PC-9 (cell line): ENCODE measurements at regions of chr18 and their contacts with region 1.

Region 1: DNA sequence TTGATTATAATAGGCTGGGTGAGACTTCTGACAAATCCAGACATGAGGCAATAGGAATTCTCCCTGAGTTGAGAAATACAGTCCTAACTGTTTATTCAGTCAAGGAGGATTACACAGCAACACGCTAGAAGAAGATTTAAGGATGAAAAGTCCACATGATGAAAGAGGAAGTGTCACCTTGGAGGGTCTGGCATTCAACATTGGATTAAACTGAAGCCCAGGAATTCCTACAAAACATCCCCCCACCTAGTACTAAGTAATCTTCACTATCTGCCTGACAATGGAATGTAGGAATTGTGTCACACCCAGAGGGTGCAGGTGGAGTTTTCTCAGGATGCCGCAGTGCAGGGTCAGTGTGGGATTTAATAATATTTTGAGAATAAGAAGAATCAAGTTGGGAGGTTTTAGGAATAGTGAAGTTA is 142.4 kb downstream of the SOCS6 start:
- DNase-seq: peak in 1 of 2 experiments; percentile 61
- H3K4me3 ChIP-seq: no peak overlapping the region
- H3K27ac ChIP-seq: peak overlapping the region; percentile 39
- H3K4me1 ChIP-seq: peaks cover 20% of the 10 kb centered on the region
- H3K27me3 ChIP-seq: no peaks in the 10 kb centered on the region
- CTCF ChIP-seq: no peak

Region 2: DNA sequence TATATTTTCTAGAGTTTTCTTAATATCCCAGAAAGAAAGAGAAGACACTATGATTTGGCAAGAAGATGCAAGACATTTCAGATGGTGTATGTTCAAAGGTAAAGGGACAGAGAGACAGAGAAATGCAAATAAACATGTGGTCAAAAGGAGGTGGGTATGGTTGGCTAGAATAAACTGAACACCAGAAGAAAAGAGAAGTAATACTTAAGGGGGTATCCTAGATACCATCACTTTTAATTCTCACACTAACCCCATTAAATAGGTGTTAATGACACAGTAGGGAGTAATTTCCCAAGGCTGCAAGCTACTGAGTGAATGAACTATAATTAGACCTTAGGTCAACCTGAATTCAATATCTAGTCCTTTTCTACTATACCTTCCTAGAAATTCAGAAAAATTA is 372.3 kb before region 1 on chr18:
- CTCF ChIA-PET with region 1: no interaction called
- POLR2A ChIA-PET with region 1: no interaction called
- intact Hi-C with region 1: no loop called
- DNase-seq: no peak
- H3K4me3 ChIP-seq: no peak overlapping the region
- H3K27ac ChIP-seq: no peak overlapping the region
- H3K4me1 ChIP-seq: no peaks in the 10 kb centered on the region
- H3K27me3 ChIP-seq: no peaks in the 10 kb centered on the region
- CTCF ChIP-seq: no peak

Region 3: GRCh38 chr18:70181015-70181414 is 250.2 kb before region 1 on chr18:
- CTCF ChIA-PET with region 1: no interaction called
- POLR2A ChIA-PET with region 1: no interaction called
- intact Hi-C with region 1: loop called (anchors 5 kb)
- DNase-seq: peak; percentile 3 to 90
- H3K4me3 ChIP-seq: no peak overlapping the region
- H3K27ac ChIP-seq: peak overlapping the region; percentile 62
- H3K4me1 ChIP-seq: peaks cover 17% of the 10 kb centered on the region
- H3K27me3 ChIP-seq: no peaks in the 10 kb centered on the region
- CTCF ChIP-seq: no peak

Region 4: DNA sequence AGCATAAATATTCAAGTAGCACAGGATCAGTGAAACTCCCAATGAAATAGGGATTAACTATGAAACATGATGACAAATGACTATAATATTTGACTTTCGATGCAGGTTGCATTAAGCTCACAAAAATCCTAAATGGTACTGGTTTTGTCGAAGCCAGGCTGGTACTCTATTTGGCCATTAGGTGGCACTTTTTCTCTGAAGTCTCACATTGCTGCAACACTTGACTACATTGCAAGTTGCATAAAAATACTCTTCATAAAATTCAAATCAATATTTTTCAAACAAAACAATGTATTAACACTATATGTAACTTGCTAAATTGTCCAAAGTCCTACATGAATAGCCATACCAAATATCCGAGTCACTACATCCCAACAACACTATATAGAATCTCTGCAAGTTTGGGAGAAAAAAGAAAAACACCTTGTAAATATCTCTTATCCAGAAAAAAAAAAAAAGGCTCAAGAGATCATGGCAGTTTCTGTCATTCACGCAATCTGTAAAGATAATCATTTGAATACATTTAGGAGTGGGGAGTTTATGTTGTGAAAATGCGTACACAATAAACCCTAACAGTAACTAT is 235.3 kb before region 1 on chr18:
- CTCF ChIA-PET with region 1: interaction called, 12 read pairs
- POLR2A ChIA-PET with region 1: no interaction called
- intact Hi-C with region 1: loop called (anchors 1 kb)
- DNase-seq: peak; percentile 9 to 61
- H3K4me3 ChIP-seq: no peak overlapping the region
- H3K27ac ChIP-seq: peak overlapping the region; percentile 45; the same call in 1 of the 2 replicates
- H3K4me1 ChIP-seq: no peaks in the 10 kb centered on the region
- H3K27me3 ChIP-seq: no peaks in the 10 kb centered on the region
- CTCF ChIP-seq: peak; percentile 84

Region 5: GRCh38 chr18:70288851-70289328 is 142.3 kb before region 1 on chr18 and contains the start of gene SOCS6:
- CTCF ChIA-PET with region 1: no interaction called
- POLR2A ChIA-PET with region 1: no interaction called
- intact Hi-C with region 1: loop called (anchors 5 kb)
- DNase-seq: peak; percentile 53 to 58
- H3K4me3 ChIP-seq: peak within 1 kb of the TSS; percentile 94
- H3K27ac ChIP-seq: peak within 1 kb of the TSS; percentile 61
- H3K4me1 ChIP-seq: peaks cover 45% of the 10 kb centered on the region
- H3K27me3 ChIP-seq: no peaks in the 10 kb centered on the region
- CTCF ChIP-seq: no peak
- total RNA-seq, gene SOCS6: 20.9 and 21.0 TPM in 2 replicates

Region 6: DNA sequence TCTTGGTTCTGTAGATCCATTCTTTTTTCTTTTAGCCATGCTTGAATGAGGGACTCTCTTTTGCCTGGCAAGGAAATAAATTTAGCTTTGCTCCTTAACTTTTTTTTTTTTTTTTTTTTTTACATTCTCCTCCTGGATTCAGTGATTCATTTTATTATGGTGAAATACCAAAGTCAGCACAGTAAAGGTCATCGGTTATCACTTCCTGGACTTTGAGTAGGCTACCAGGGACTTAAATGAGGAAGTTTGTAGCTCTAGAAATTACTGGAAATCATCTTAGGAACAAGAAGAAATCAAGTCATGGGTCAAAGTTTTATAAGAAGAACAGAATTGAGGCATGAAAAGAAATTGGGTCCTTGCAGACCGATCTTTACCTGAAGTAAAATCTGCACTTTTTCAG is 67.4 kb before region 1 on chr18:
- CTCF ChIA-PET with region 1: no interaction called
- POLR2A ChIA-PET with region 1: interaction called, 14 read pairs
- intact Hi-C with region 1: no loop called
- DNase-seq: peak in 1 of 2 experiments; percentile 88
- H3K4me3 ChIP-seq: no peak overlapping the region
- H3K27ac ChIP-seq: peak overlapping the region; percentile 57
- H3K4me1 ChIP-seq: peaks cover 24% of the 10 kb centered on the region
- H3K27me3 ChIP-seq: no peaks in the 10 kb centered on the region
- CTCF ChIP-seq: no peak

Region 7: DNA sequence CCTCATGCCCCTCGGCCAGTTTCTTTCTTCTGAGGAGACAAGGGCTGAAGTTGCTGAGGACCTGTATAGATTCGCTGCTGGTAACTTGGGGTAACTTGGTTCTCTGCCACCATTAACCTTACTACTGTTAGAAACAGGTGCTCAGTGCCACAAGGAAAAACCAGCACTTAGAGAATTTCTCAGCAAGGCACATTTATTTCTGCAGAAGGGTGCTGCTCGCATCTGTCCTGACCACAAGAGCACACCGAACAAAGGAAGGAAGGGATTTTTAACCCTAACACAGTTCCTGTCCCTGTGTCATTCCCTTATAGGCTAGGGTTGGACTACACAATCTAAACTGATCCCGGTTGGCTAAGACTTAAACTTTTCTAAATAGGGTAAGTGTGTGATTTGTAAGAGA is 11.7 kb after region 1 on chr18:
- CTCF ChIA-PET with region 1: interaction called, 10 read pairs
- POLR2A ChIA-PET with region 1: no interaction called
- intact Hi-C with region 1: no loop called
- DNase-seq: no peak
- H3K4me3 ChIP-seq: no peak overlapping the region
- H3K27ac ChIP-seq: no peak overlapping the region
- H3K4me1 ChIP-seq: no peaks in the 10 kb centered on the region
- H3K27me3 ChIP-seq: no peaks in the 10 kb centered on the region
- CTCF ChIP-seq: no peak

Region 8: DNA sequence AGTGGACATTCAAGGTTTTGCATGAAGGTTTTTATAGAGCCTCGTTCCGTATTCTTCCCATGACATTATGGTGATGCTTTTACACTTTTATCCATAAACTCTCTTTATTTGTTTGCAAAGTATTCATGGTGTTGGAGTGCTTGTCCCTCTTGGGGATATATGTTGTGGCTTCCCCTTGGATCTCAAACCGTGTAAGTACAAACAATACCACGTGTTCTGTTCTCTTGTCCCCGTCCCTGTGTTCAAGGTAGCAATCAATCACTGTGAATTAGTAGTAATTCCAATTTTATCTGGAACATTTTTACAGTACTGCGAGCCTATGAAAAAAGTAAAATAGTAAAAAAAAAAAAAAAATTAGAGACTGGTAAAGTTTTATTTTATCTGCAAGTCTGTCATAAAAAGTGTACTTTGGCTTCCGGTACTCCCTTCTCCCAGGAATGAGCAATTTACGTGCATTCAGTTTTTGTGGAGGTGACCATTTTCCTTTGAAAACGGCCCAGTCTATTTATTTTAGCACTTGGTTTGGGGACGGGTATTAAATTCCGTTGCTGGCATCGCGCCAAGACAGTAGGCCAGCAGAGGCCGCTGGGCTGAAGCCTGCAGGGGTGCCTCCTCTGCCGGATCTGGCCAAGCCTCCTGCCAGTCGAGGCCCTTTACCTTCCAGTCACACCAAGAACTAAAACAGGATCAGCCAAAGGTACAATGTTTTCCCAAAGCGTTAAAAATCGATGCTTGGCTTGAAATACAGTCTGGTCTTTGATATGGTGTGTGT is 33.3 kb after region 1 on chr18:
- CTCF ChIA-PET with region 1: no interaction called
- POLR2A ChIA-PET with region 1: no interaction called
- intact Hi-C with region 1: no loop called
- DNase-seq: peak in 1 of 2 experiments; percentile 60
- H3K4me3 ChIP-seq: peak overlapping the region; percentile 44; the same call in 1 of the 2 replicates
- H3K27ac ChIP-seq: no peak overlapping the region
- H3K4me1 ChIP-seq: 0 out of 2 replicates have a peak, but pooled peaks cover 4% of the 10 kb centered on the region
- H3K27me3 ChIP-seq: no peaks in the 10 kb centered on the region
- CTCF ChIP-seq: no peak